ENCODE measurements at regions of chr4 and their contacts with region 1.

Region 1: DNA sequence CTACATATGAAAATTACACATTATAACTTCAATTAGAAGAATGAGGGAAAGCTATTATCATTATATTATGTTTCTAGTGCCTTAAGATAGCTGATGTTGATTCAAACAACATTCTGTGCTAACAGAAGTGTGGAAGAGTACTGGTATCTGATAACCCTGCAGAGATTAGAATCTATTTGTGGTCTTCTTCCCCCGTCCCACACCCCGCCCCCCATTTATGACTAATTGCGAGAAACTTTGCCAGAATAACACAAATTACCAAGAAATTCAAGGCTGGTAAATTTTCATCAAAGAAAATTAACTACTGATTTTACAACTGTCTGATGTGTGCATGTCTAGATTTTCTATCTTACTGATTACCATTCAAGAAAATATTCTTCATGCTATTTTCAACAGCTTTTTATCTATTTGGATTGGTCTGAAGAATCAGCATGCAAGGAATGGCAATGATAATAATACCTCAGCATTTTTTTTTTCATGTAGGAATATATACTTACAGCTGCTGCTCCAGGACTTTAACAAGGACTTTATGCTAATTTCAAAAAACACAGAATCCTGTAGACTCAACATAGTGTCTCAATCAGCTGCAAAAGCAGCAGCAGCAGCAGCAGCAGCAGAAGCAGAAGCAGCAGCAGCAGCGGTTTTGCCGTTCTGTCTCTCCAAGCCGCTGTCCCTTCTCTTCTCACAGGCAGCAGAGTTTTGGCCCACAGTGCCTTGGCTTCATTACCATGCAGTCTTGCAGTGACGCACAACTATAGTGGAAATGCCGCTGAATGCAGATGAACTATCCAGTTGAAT is 126.7 kb downstream of the FRYL start:
- DNase-seq: no peak
- H3K4me3 ChIP-seq: no peak overlapping the region
- H3K27ac ChIP-seq: no peak overlapping the region
- H3K4me1 ChIP-seq: peaks cover 12% of the 10 kb centered on the region
- H3K27me3 ChIP-seq: no peaks in the 10 kb centered on the region
- CTCF ChIP-seq: no peak
- POLR2A ChIP-seq: no peak

Region 2: DNA sequence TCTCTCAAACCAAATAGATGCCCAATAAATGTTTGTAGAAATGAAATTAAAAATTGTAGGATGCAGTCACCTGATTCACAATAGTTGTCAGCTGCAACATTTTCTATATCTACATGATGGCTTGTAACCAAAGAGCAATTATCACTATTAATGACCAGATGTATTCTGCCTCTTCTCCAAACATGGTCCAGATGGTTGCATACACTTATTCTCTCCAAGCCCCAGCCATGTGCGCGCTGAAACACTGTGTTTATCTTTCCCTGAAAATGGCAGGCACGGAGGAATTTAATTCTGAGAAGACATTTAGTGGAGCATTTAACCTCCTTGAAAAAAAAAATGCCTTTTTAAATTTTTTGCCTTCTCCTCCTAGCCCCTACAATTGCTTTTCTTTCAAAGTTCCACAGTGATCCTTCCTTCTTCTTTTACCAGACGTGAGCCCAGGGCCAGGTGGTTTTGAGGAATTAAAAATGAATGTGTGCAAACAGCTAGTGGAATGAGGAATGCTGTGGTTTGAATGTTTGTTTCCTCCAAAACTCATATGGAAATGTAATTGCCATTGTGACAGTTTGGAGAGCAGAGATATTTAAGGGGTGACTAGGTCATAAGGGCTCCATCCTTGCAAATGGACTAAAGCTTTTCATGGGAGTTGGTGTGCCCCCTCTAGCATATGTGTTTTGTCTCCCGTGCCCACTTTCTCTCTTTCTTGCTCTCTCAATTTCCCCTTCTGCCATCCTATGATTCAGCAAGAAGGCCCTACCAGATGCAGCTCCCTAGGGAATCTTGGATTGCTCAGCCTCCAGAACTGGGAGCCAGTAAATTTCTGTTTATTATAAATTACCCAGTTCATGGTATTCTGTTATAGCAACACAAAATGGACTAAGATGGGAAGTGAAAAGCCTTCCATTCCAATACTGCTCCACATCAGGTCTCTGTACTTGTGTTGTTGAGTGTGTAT is 1486.1 kb before region 1 on chr4:
- intact Hi-C with region 1: loop called (anchors 10 kb)
- DNase-seq: no peak
- H3K4me3 ChIP-seq: no peak overlapping the region
- H3K27ac ChIP-seq: no peak overlapping the region
- H3K4me1 ChIP-seq: no peaks in the 10 kb centered on the region
- H3K27me3 ChIP-seq: no peaks in the 10 kb centered on the region
- CTCF ChIP-seq: no peak
- POLR2A ChIP-seq: no peak

Measured in vagina (tissue), 2 donors.